Caco-2 (cell line): ENCODE measurements at regions of chr12 and their contacts with region 1.

Region 1: DNA sequence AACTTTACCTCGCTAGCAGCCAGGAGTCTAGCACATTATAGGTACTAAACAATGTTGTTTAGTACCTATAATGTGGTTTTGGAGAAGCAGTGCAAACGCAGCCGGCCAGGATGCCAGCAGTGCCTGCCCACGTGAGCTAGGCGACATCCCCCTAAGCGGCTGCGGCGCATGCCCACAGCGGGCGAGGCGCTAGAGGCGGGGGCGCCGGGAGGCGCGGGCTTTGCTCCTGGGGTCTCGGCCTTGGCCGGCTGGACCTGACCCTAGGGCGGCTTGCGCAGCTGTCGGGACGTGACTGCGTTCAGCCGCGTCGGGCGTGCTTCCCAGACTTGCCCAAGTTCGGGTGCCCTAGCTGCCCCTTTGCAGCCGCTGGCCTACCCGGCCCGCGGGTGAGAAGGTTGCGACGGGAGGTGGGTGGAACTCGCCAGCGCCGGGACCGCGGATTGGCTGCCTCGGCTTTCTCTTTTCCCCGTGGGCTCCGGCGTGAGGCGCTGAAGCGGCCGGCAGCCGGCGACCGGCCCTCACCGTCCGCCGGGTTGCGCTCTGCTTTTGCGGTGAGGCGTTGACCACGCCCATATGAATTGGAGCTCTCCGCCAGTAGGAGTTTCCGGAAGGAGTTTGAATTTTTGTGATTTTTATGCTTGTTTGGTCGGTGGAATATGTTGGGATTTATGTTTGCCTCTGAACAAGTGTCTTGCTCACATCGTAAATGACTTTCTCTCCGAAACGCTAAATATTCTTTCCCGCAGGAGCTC is at the start of gene TMEM19:
- DNase-seq: peak; percentile 89 to 91
- H3K4me3 ChIP-seq: peak within 1 kb of the TSS; percentile 46
- H3K4me3 Mint-ChIP-seq: peak within 1 kb of the TSS; percentile 97
- H3K27ac Mint-ChIP-seq: peak within 1 kb of the TSS; percentile 93
- H3K4me1 ChIP-seq: no peaks in the 10 kb centered on the region
- H3K4me1 Mint-ChIP-seq: no peaks in the 10 kb centered on the region
- H3K27me3 ChIP-seq: no peaks in the 10 kb centered on the region
- H3K27me3 Mint-ChIP-seq: no peaks in the 10 kb centered on the region
- CTCF ChIP-seq: peak in 1 of 2 experiments; percentile 39
- total RNA-seq, gene TMEM19: 17.8 and 24.2 TPM in 2 replicates

Region 2: DNA sequence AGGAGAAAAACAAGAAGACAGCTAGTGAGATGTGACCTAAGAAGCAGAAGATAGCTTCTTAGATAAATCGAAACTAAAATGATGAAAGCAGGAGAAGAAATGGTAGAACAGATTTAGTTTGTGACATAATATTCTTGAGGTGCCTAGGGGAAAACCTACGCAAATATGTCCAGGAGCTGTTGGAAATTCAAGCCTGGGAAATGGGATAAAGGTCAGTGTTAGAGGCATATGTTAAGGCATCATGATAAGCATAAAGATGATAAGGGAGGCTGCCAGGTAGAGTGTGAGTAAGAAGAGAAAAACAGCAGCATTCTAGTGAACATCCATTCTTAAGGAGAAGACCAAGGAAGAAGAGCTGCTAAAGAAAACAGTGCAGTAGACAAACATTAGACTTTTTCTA is 356.1 kb before region 1 on chr12:
- CTCF ChIA-PET with region 1: no interaction called
- POLR2A ChIA-PET with region 1: no interaction called
- intact Hi-C with region 1: no loop called
- DNase-seq: no peak
- H3K4me3 ChIP-seq: no peak overlapping the region
- H3K4me3 Mint-ChIP-seq: no peak overlapping the region
- H3K27ac Mint-ChIP-seq: no peak overlapping the region
- H3K4me1 ChIP-seq: no peaks in the 10 kb centered on the region
- H3K4me1 Mint-ChIP-seq: peaks cover 9% of the 10 kb centered on the region
- H3K27me3 ChIP-seq: no peaks in the 10 kb centered on the region
- H3K27me3 Mint-ChIP-seq: no peaks in the 10 kb centered on the region
- CTCF ChIP-seq: no peak

Region 3: GRCh38 chr12:71392521-71393145 is 293.5 kb before region 1 on chr12:
- CTCF ChIA-PET with region 1: no interaction called
- POLR2A ChIA-PET with region 1: no interaction called
- intact Hi-C with region 1: no loop called
- DNase-seq: peak in 1 of 2 experiments; percentile 34
- H3K4me3 ChIP-seq: no peak overlapping the region
- H3K4me3 Mint-ChIP-seq: no peak overlapping the region
- H3K27ac Mint-ChIP-seq: no peak overlapping the region
- H3K4me1 ChIP-seq: no peaks in the 10 kb centered on the region
- H3K4me1 Mint-ChIP-seq: no peaks in the 10 kb centered on the region
- H3K27me3 ChIP-seq: no peaks in the 10 kb centered on the region
- H3K27me3 Mint-ChIP-seq: peaks cover 3% of the 10 kb centered on the region
- CTCF ChIP-seq: peak; percentile 61 to 75

Region 4: DNA sequence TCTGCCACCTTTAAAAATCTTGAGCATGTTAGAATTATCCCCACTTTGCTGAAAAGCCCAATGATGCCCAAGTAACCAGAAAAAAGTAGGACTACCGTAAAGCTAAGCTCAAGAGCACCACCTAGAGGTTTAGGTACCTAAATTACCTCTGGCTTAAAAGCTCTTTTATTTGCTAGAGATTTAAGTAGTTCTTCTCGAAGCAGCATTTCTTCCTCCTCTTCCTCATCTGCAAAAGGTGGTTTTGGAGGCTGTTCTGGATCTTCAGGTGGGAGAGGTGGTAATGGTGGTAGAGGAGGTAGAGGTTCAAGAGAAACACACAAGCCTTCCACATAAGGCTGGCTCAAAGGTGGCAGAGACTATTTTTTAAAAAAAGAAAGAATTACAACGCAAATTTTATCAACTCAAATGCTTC is 49.4 kb before region 1 on chr12:
- CTCF ChIA-PET with region 1: interaction called, 7 read pairs
- POLR2A ChIA-PET with region 1: interaction called, 16 read pairs
- intact Hi-C with region 1: loop called (anchors 2 kb)
- DNase-seq: peak in 1 of 2 experiments; percentile 60
- H3K4me3 ChIP-seq: no peak overlapping the region
- H3K4me3 Mint-ChIP-seq: no peak overlapping the region
- H3K27ac Mint-ChIP-seq: no peak overlapping the region
- H3K4me1 ChIP-seq: peaks cover 22% of the 10 kb centered on the region
- H3K4me1 Mint-ChIP-seq: peaks cover 10% of the 10 kb centered on the region
- H3K27me3 ChIP-seq: no peaks in the 10 kb centered on the region
- H3K27me3 Mint-ChIP-seq: no peaks in the 10 kb centered on the region
- CTCF ChIP-seq: peak; percentile 63 to 84

Region 5: DNA sequence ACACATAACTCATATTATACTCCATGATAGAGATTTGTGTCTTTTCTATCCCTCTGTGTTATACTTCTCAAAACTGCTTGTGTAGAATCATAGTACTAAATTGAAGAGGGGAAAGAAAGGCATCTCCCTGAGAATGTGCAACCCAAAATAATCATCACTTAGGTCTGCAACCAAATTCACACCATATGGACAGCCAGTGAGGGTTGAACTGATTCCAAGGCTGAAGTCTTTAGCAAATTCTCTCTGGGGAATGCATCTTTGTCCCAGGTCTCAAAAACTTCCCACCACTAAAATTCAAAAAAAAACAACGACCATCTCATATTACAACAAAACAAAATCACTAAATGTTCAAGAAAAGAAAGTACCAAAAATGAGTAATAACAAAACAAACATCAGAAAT is 33.4 kb before region 1 on chr12:
- CTCF ChIA-PET with region 1: no interaction called
- POLR2A ChIA-PET with region 1: no interaction called
- intact Hi-C with region 1: no loop called
- DNase-seq: no peak
- H3K4me3 ChIP-seq: no peak overlapping the region
- H3K4me3 Mint-ChIP-seq: no peak overlapping the region
- H3K27ac Mint-ChIP-seq: no peak overlapping the region
- H3K4me1 ChIP-seq: no peaks in the 10 kb centered on the region
- H3K4me1 Mint-ChIP-seq: no peaks in the 10 kb centered on the region
- H3K27me3 ChIP-seq: no peaks in the 10 kb centered on the region
- H3K27me3 Mint-ChIP-seq: no peaks in the 10 kb centered on the region
- CTCF ChIP-seq: no peak

Region 6: DNA sequence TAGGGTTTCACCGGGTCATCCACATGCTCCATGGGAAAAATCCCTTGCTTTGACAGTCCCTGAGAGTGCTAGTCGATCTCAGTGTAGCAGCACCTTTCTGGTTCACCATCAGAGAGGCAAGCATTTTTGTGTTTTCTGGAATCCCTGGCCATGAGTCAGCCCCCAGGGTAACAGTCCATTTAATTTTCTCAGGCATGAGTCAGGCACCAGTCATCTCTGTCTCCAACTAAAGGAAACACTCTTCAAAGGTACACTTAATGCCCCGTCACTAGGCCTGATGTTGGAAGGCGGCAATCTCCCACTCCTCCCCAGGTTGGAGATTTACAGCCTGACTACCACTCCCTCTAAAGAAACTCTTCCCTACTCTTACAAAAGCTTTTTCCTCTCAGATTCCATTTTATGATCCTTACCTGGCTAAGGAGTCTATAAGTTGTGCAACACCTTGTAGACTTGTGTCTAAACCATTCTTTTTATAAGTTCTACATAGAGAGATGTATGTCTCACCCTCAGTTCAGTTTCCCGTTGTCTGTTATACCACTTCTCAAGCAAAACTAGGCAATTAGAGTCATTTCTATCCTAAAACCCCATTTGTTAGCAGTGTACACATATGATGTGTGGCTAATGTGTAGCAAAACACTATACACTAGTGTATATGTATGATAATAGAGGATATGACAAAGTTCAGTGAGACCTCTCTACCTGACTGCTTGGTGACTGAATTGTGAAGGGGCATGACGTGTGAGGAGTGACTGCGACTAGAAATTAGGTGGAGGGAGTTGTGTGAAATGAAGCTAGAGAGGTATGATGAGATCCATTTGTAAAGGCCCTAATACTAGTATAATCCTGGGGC is 24.4 kb after region 1 on chr12:
- CTCF ChIA-PET with region 1: no interaction called
- POLR2A ChIA-PET with region 1: interaction called, 3 read pairs
- intact Hi-C with region 1: loop called (anchors 2 kb)
- DNase-seq: peak; percentile 47 to 53
- H3K4me3 ChIP-seq: no peak overlapping the region
- H3K4me3 Mint-ChIP-seq: peak overlapping the region; percentile 2
- H3K27ac Mint-ChIP-seq: peak overlapping the region; percentile 46
- H3K4me1 ChIP-seq: peaks cover 12% of the 10 kb centered on the region
- H3K4me1 Mint-ChIP-seq: peaks cover 17% of the 10 kb centered on the region
- H3K27me3 ChIP-seq: no peaks in the 10 kb centered on the region
- H3K27me3 Mint-ChIP-seq: no peaks in the 10 kb centered on the region
- CTCF ChIP-seq: no peak